Activated B cell treated with CpG ODN at 0.5 μM for 24 hours (primary cell): ENCODE measurements at regions of chr17 and their contacts with region 1.

Region 1: GRCh38 chr17:81911277-81911961 is at the start of gene PCYT2:
- DNase-seq: peak; percentile 84
- ATAC-seq: peak; percentile 95
- H3K4me3 Mint-ChIP-seq: peak within 1 kb of the TSS; percentile 85
- H3K27ac Mint-ChIP-seq: peak within 1 kb of the TSS; percentile 65
- H3K4me1 Mint-ChIP-seq: peaks cover 15% of the 10 kb centered on the region
- H3K27me3 Mint-ChIP-seq: no peaks in the 10 kb centered on the region
- CTCF ChIP-seq: no peak
- total RNA-seq, gene PCYT2: 40.3 and 44.1 TPM in 2 replicates

Region 2: DNA sequence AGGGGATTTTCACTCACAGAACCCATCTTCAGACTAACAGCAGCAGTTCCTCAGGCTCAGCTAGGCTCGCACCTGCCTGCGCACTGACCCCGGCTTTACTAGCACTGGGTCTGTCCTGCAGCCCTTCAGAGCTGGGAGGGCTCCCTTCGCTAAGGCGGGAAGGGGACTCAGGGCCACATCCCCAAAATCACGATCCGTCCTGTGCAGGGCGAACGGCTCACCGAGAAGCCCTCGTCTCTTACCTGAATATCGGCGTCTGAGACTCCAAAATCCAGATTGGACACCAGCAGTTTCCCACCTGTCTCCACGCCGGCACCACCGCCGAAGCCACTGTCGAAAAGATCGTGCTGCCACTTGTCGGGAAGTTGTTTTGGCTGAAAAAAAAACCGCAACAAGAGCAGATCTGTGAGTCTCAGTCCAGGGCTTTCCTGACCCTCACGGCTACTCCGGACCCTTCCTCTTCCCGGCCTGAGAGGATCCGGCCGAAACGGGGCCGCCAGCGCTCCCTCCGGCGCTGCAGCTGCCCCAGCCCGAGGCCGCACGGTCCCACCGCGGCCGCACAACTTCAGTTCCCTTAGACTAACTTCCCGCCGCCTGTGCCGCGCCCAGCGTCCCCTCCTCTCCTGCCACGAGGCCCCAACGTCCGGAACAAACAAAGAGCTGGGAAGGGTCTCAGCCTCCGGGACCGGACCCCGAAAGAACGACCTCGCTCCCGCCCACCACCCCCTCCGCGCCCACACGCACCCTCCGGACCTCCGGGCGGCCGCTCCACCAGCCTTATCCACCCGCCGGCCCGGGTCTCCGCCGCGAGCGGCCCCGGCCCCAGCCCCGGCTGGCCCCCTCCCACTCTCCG is 20.7 kb before region 1 on chr17:
- CTCF ChIA-PET with region 1: no interaction called
- POLR2A ChIA-PET with region 1: interaction called, 6 read pairs
- intact Hi-C with region 1: loop called (anchors 1 kb)
- DNase-seq: no peak
- ATAC-seq: no peak
- H3K4me3 Mint-ChIP-seq: peak overlapping the region; percentile 88
- H3K27ac Mint-ChIP-seq: peak overlapping the region; percentile 84
- H3K4me1 Mint-ChIP-seq: peaks cover 30% of the 10 kb centered on the region
- H3K27me3 Mint-ChIP-seq: no peaks in the 10 kb centered on the region
- CTCF ChIP-seq: no peak